Activated CD4-positive, alpha-beta T cell treated with anti-CD3 and anti-CD28 coated beads for 36 hours (primary cell): ENCODE measurements at regions of chr1 and their contacts with region 1.

Region 1: GRCh38 chr1:31394628-31395193 is 18.3 kb upstream of the SERINC2 start:
- DNase-seq: peak; percentile 91
- ATAC-seq: peak; percentile 98
- H3K4me3 Mint-ChIP-seq: peak overlapping the region; percentile 70
- H3K27ac Mint-ChIP-seq: no peak overlapping the region
- H3K4me1 Mint-ChIP-seq: peaks cover 4% of the 10 kb centered on the region
- H3K27me3 Mint-ChIP-seq: no peaks in the 10 kb centered on the region

Region 2: DNA sequence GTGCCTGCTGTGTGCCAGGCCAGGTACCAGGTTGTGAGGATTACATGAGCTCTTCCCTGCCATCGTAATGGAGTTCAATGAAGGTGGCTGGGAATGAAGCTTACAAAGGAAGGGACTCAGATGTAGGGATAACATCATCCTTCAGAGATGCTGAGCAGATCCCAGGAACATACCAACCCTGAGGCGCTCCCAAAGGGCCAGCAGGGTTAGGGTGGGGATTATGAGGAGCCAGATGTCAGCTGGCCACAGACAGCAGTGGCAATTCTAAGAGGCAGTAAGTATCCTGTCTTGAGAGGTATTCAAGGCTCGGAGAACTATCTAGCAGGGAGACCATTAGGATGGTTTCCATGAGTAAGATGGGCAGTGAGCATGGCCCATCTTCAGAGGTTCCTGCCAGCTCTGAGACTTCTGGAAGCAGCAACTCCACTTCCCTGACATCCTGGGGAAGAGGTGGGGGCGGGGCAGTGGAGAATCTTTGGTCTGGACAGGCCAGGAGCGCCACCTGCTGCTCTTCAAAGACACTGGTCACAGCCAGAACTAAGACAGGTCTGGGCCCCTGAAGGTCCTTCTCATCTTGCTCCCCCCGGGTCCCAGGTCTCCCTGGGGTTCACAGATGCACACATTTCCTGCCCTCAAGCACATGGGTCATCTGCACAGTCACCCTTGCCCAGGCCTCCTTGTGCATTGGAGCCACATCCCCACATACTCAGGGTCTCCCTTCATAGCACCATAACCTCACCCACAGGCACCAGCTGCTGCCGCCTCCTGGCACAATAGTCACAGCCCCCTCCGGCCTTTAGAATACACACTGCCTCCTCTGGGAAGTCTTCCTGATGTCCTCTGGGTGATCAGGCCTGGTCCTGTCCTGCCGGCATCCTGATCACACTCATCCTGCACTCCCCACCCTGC is 483.4 kb before region 1 on chr1:
- CTCF ChIA-PET with region 1: no interaction called
- POLR2A ChIA-PET with region 1: no interaction called
- intact Hi-C with region 1: no loop called
- DNase-seq: peak; percentile 82
- ATAC-seq: peak; percentile 74
- H3K4me3 Mint-ChIP-seq: no peak overlapping the region
- H3K27ac Mint-ChIP-seq: no peak overlapping the region
- H3K4me1 Mint-ChIP-seq: peaks cover 13% of the 10 kb centered on the region
- H3K27me3 Mint-ChIP-seq: peaks cover 20% of the 10 kb centered on the region

Region 3: DNA sequence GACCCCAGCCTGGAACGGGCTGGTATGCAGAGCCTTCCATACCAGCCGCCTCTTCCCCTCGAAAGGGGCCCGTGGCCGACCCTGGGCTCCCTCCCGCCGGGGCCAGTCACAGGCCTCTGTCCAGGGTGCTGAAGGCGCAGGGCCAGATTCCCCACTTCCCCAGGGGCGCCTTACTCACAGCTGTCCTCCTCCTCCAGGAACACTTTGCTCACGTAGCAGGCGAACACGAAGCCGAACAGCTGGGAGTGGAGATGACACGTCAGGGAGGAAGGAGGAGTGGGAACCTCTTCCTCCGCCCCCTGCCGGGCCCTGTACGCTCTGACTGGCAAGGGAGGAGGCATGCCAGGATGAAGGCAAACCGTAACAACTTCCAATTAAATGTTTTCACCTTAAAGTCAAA is 212.4 kb before region 1 on chr1:
- CTCF ChIA-PET with region 1: no interaction called
- POLR2A ChIA-PET with region 1: no interaction called
- intact Hi-C with region 1: loop called in 1 of 2 experiments (anchors 10 kb)
- DNase-seq: peak; percentile 74
- ATAC-seq: peak; percentile 46
- H3K4me3 Mint-ChIP-seq: no peak overlapping the region
- H3K27ac Mint-ChIP-seq: no peak overlapping the region
- H3K4me1 Mint-ChIP-seq: peaks cover 7% of the 10 kb centered on the region
- H3K27me3 Mint-ChIP-seq: peaks cover 38% of the 10 kb centered on the region

Region 4: DNA sequence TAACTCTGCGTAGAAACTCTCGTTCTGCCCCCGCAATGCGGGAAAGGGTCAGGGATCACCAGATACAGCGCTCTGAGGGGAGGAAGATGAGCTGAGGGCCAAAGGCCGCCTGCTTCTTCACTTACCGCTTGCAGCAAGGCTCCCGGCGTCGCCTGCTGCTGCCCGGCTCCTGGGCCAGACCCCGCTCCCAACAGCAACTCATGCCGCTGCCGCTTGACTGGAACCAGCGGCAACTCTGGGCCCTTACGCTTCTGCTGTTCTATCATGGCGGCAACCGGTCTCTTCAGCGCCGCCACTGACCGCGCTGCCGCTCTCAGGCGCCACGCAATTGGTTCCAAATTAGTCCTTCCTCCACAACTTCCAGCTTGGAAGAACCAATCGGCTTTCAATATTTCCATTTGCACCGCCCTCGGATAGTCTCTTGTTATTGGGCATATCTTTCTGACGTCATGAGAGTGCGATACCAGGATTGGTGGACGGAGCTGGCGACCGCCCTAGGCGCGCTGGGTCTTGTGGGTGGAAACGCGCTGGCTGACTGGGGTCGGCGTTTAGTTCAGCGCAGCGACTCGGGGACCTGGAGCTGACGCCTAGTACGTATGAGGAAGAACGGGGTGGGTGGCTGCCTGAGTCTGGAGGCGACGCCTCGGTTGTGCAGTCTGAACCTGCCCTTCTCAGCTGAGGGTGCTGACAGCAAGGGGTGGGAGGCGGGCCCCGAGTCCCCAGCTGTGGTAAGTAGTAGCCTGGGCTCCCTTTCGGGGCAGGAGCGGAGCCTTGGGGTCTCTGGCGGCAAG is 98.0 kb before region 1 on chr1 and contains the starts of genes SNRNP40 and ZCCHC17:
- CTCF ChIA-PET with region 1: interaction called, 12 read pairs
- POLR2A ChIA-PET with region 1: interaction called, 4 read pairs
- intact Hi-C with region 1: no loop called
- DNase-seq: peak; percentile 94
- ATAC-seq: peak; percentile 98
- H3K4me3 Mint-ChIP-seq: no peak within 1 kb of the TSS
- H3K27ac Mint-ChIP-seq: no peak within 1 kb of the TSS
- H3K4me1 Mint-ChIP-seq: peaks cover 34% of the 10 kb centered on the region
- H3K27me3 Mint-ChIP-seq: no peaks in the 10 kb centered on the region
- total RNA-seq, gene SNRNP40: 101 to 111 TPM
- total RNA-seq, gene ZCCHC17: 23.9 to 28.8 TPM

Region 5: GRCh38 chr1:31413405-31414125 is 18.9 kb after region 1 on chr1:
- CTCF ChIA-PET with region 1: interaction called, 35 read pairs
- POLR2A ChIA-PET with region 1: no interaction called
- intact Hi-C with region 1: no loop called
- DNase-seq: peak; percentile 40
- ATAC-seq: peak; percentile 53
- H3K4me3 Mint-ChIP-seq: peak overlapping the region; percentile 73
- H3K27ac Mint-ChIP-seq: no peak overlapping the region
- H3K4me1 Mint-ChIP-seq: peaks cover 8% of the 10 kb centered on the region
- H3K27me3 Mint-ChIP-seq: peaks cover 55% of the 10 kb centered on the region

Region 6: DNA sequence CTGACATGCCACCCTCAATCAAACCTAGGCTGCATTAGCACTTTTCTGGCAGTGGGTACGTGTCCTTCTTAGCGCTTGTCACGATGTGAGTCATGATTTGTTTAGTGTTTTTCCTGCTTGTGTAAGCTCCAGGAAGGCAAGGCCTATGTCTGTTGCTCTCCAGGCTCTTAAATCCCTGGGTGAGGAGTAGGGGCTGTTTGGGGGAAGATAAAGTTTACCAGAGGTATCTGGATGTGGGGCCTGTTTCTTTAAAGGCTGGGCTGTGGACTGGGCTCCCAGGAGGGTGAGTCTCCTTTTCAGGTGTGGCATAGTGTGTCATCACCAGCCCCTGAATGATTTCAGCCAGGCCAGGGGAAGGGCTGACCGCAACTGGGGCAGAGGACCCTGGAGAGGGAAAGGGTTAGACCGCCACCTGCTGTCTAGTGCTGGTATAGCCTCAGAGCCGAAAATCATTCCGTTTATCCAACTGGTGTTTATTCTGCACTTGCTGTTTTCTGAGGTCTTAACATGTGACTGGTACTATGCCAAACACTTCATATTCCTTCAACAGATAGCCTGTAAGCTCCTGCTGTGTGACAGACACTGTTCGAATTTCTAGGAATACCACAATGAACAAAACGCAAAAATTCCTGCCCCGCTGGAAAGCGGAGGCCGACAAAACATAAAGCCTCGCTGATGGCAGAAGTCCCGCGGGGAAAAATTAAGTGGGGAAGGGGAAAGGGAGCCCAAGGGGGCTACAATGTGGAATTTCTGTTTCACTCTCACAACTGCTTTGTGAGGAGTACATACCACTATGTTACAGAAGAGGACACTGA is 28.0 kb after region 1 on chr1:
- CTCF ChIA-PET with region 1: interaction called, 35 read pairs
- POLR2A ChIA-PET with region 1: no interaction called
- intact Hi-C with region 1: loop called (anchors 1 kb)
- DNase-seq: peak; percentile 84
- ATAC-seq: peak; percentile 89
- H3K4me3 Mint-ChIP-seq: no peak overlapping the region
- H3K27ac Mint-ChIP-seq: no peak overlapping the region
- H3K4me1 Mint-ChIP-seq: no peaks in the 10 kb centered on the region
- H3K27me3 Mint-ChIP-seq: peaks cover 14% of the 10 kb centered on the region

Region 7: GRCh38 chr1:31548907-31549808 is 154.4 kb after region 1 on chr1:
- CTCF ChIA-PET with region 1: interaction called, 16 read pairs
- POLR2A ChIA-PET with region 1: no interaction called
- intact Hi-C with region 1: loop called (anchors 1 kb)
- DNase-seq: peak; percentile 93
- ATAC-seq: peak; percentile 91
- H3K4me3 Mint-ChIP-seq: peak overlapping the region; percentile 49
- H3K27ac Mint-ChIP-seq: peak overlapping the region; percentile 71
- H3K4me1 Mint-ChIP-seq: peaks cover 9% of the 10 kb centered on the region
- H3K27me3 Mint-ChIP-seq: peaks cover 8% of the 10 kb centered on the region